ENCODE measurements at regions of chr10 and their contacts with region 1.

Region 1: DNA sequence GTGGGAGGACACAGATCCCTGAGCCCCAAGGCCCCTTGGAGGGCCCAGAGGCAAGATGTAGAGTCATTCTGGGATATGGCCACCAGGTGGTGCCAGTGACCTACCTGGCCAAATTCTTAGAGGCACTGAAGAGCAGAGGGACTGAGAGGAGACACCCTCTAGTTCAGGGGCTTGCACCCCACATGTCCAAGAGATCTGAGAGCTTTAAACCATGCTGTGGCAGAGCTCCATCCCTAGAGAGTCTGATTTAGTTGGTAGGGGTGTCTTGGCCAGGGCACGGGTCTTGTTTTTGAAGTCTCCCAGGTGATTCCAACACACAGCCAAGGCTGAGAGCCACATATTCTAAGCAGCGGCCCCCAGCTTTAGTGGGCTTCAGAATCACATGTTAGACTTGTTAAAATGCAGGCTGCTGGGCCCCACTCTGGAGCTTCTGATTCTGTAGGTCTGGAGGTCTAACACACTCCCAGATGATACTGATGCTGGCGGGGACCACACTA is 52.5 kb downstream of the PRF1 start:
- DNase-seq: no peak
- H3K4me3 ChIP-seq: no peak overlapping the region
- H3K27ac ChIP-seq: no peak overlapping the region
- H3K4me1 ChIP-seq: peaks cover 0 to 13% (median 5%) of the 10 kb centered on the region in 4 donors
- H3K27me3 ChIP-seq: no peaks in the 10 kb centered on the region
- CTCF ChIP-seq: peak; percentile 69 to 94 (median 89)
- EP300 ChIP-seq: no peak
- POLR2A ChIP-seq: no peak

Region 2: DNA sequence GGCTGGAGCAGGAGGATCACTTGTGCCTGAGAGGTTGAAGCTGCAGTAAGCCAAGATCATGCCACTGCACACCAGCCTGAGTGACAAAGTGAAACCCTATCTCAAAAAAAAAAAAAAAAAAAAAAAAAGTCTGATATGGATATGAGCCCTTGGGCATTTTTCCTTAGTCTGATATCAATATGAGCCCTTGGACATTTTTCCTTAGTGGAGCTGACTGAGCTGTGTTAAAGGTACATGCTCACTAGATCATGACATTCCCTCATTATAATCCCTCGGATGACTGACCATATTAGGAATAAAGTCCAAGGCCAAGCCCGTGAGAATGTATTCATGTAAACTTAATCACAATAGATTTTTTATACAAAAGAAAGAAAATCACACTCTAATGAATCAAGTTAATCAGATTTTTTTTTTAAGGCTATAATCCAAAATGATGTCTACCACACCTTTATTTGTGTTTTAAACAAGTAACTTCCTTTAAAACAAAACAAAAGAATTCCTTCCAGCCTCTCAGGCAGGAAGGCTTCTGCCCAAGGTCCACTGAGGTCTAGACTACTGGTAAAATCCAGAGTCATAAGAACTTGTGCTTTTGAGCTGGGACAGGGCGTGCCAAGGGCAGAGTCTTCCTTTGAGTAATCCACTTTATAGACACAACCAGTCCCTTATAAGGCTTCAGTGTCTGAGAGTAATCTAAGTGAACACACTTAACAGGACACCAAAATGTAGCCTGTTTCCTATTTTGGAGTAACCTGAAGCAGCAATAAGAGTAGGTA is 322.3 kb before region 1 on chr10:
- intact Hi-C with region 1: loop called (anchors 10 kb)
- DNase-seq: no peak
- H3K4me3 ChIP-seq: no peak overlapping the region
- H3K27ac ChIP-seq: peak overlapping the region; percentile 2 to 64 (median 52)
- H3K4me1 ChIP-seq: peaks cover 0 to 46% (median 29%) of the 10 kb centered on the region in 4 donors
- H3K27me3 ChIP-seq: no peaks in the 10 kb centered on the region
- CTCF ChIP-seq: no peak
- EP300 ChIP-seq: no peak
- POLR2A ChIP-seq: peak in 1 of 2 donors; percentile 8

Region 3: GRCh38 chr10:70498970-70499835 is 50.8 kb before region 1 on chr10:
- intact Hi-C with region 1: no loop called
- DNase-seq: no peak
- H3K4me3 ChIP-seq: no peak overlapping the region
- H3K27ac ChIP-seq: peak overlapping the region in 3 of 4 donors; percentile 19 to 48 (median 24)
- H3K4me1 ChIP-seq: peaks cover 0 to 39% (median 18%) of the 10 kb centered on the region in 4 donors
- H3K27me3 ChIP-seq: no peaks in the 10 kb centered on the region
- CTCF ChIP-seq: no peak
- EP300 ChIP-seq: no peak
- POLR2A ChIP-seq: no peak

Region 4: GRCh38 chr10:70584909-70585544 is 35.0 kb after region 1 on chr10:
- intact Hi-C with region 1: no loop called
- DNase-seq: peak; percentile 60
- H3K4me3 ChIP-seq: no peak overlapping the region
- H3K27ac ChIP-seq: no peak overlapping the region
- H3K4me1 ChIP-seq: no peaks in the 10 kb centered on the region
- H3K27me3 ChIP-seq: no peaks in the 10 kb centered on the region
- CTCF ChIP-seq: no peak
- EP300 ChIP-seq: no peak
- POLR2A ChIP-seq: no peak

Region 5: DNA sequence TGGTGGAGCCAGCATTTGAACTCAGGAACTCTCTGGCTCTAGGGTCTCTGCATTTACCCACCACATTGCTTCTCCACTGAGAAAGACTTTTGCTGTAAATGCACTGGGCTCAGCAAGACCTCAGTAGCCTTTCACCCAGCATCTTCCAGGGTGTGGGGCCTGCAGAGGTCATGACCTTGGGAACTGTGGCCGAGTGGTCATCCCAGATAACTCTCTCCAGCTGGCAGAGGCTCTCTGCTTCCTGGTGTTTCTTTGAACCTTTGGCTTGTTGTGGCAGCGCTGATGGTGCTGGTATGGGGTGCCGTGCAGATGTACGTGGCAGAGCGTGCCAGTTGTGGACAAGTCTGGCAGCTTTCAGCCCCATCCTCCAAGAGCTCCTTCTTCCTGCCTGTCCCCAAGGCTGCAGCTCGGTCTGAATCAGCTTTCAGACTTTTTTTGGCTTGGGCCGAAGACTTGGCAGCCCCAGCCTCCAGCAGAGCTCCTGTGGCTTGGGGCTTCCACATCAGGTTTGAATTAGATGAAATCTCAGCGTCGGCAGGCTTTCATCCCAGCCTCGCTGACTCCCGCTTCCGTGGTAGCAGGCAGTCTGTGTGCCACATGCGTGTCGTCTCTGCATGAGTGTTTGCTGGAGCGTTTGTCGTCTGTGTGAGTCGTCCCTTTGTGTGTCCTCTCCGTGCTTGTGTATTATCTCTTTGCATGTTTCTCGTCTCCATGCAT is 143.8 kb after region 1 on chr10:
- intact Hi-C with region 1: loop called (anchors 5 kb)
- DNase-seq: peak; percentile 87
- H3K4me3 ChIP-seq: no peak overlapping the region
- H3K27ac ChIP-seq: peak overlapping the region in 2 of 4 donors; percentile 22 to 49
- H3K4me1 ChIP-seq: peaks cover 0 to 35% (median 28%) of the 10 kb centered on the region in 4 donors
- H3K27me3 ChIP-seq: no peaks in the 10 kb centered on the region
- CTCF ChIP-seq: no peak
- EP300 ChIP-seq: no peak
- POLR2A ChIP-seq: no peak

Region 6: GRCh38 chr10:70758757-70759514 is 208.9 kb after region 1 on chr10:
- intact Hi-C with region 1: loop called (anchors 1 kb)
- DNase-seq: peak; percentile 85
- H3K4me3 ChIP-seq: no peak overlapping the region
- H3K27ac ChIP-seq: no peak overlapping the region
- H3K4me1 ChIP-seq: peaks cover 0 to 3% (median 0%) of the 10 kb centered on the region in 4 donors
- H3K27me3 ChIP-seq: no peaks in the 10 kb centered on the region
- CTCF ChIP-seq: peak; percentile 57 to 77 (median 64)
- EP300 ChIP-seq: no peak
- POLR2A ChIP-seq: no peak

Region 7: DNA sequence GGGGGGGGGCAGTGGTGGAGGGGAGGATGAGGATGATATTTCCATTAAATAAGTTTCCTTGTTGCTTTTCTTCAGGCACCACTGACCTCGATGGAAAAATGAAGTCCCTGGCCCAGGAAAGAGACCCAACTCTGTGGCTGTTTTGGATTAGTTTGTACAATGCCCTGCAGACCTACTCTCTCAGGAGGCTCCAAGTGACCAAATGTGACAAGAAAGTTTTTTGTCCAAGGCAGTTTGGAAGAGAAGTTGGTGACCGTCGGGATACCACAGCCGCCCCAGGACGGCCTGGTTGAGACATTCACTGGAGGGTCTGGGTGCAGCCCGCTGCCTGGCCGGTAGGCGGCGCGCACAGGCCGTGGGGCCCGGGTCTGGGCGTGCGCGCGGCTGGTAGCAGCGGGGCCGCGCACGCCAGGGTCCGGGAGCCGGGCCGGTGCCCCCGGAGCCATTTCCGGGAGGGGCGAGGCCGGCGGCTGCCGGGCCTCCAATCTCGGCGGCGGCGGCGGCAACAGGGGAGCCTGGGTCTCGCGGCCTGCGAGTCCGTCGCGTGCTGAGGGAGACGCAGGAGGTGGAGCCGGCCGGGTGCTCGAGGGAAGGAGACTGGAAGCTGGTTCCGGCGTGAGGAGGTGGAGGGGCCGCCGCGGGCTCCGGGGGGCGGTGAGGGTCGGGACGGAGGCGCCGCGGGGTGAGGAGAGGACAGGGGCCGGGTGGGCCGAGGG is 265.7 kb after region 1 on chr10 and contains the start of gene SGPL1:
- intact Hi-C with region 1: loop called (anchors 2 kb)
- DNase-seq: peak; percentile 91
- H3K4me3 ChIP-seq: peak within 1 kb of the TSS; percentile 69 to 86 (median 84)
- H3K27ac ChIP-seq: peak within 1 kb of the TSS; percentile 94 to 97 (median 95)
- H3K4me1 ChIP-seq: peaks cover 0 to 18% (median 13%) of the 10 kb centered on the region in 4 donors
- H3K27me3 ChIP-seq: no peaks in the 10 kb centered on the region
- CTCF ChIP-seq: peak; percentile 57 to 98 (median 78)
- EP300 ChIP-seq: no peak
- POLR2A ChIP-seq: no peak
- total RNA-seq, gene SGPL1: 18.5 to 22.2 (median 20.2) TPM

Region 8: GRCh38 chr10:70880077-70880534 is 330.1 kb after region 1 on chr10:
- intact Hi-C with region 1: loop called (anchors 5 kb)
- DNase-seq: peak; percentile 84
- H3K4me3 ChIP-seq: no peak overlapping the region
- H3K27ac ChIP-seq: no peak overlapping the region
- H3K4me1 ChIP-seq: no peaks in the 10 kb centered on the region
- H3K27me3 ChIP-seq: no peaks in the 10 kb centered on the region
- CTCF ChIP-seq: peak; percentile 75 to 95 (median 86)
- EP300 ChIP-seq: no peak
- POLR2A ChIP-seq: no peak